GM23248 (cell line): ENCODE measurements at regions of chr3 and their contacts with region 1.

Region 1: DNA sequence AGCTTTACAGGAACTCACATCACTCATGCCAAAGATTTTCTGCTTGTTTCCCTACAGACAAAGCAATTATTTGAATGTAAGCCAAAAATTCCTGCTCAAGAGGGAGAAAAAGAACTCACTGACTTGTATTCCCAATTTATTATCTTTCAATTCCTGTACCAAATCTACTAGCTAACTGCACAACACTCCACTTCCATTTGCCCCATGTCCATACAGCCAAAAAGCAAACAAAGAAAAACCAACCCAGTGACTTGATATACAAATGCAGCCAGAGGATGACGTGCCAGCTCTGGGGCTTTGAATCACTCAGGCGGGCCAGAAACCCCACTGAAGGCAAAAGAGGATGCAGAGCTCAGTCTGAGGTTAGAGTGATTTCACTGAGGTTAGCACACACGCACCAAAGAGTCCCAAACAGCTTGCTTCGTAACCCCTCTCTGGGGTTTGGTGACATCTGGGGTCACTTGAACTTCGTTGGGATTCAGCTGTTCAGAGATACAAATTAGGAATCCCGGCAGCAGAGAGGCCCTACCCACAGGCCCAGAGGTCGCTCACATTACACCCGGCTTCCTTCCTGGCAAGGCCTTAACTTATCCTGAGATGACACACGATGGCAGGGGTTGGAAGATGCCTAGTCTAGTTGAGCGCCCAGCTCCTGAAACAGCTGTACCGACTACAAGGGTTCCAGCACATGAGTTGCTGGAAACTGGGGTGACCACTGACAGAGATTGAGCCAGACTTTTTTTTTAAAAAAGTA is 1.6 kb downstream of the RFTN1 start:
- DNase-seq: peak; percentile 95
- H3K4me3 ChIP-seq: peak overlapping the region; percentile 88
- H3K27ac ChIP-seq: peak overlapping the region; percentile 74
- H3K4me1 ChIP-seq: peaks cover 29% of the 10 kb centered on the region
- H3K27me3 ChIP-seq: no peaks in the 10 kb centered on the region

Region 2: GRCh38 chr3:16309558-16309957 is 202.3 kb before region 1 on chr3:
- in situ Hi-C with region 1: loop called (anchors 10 kb)
- DNase-seq: peak; percentile 50
- H3K4me3 ChIP-seq: no peak overlapping the region
- H3K27ac ChIP-seq: no peak overlapping the region
- H3K4me1 ChIP-seq: peaks cover 18% of the 10 kb centered on the region
- H3K27me3 ChIP-seq: no peaks in the 10 kb centered on the region